Heart right ventricle (tissue), 16 donors: ENCODE measurements at regions of chr5 and their contacts with region 1.

Region 1: GRCh38 chr5:139335811-139336210 is 5.8 kb upstream of the PAIP2 start:
- DNase-seq: no peak
- ATAC-seq: peak in 2 of 8 donors; percentile 14 to 24
- H3K4me3 ChIP-seq: no peak overlapping the region
- H3K27ac ChIP-seq: no peak overlapping the region
- H3K4me1 ChIP-seq: peaks cover 0 to 6% (median 2%) of the 10 kb centered on the region in 9 donors
- H3K27me3 ChIP-seq: no peaks in the 10 kb centered on the region
- CTCF ChIP-seq: no peak

Region 2: DNA sequence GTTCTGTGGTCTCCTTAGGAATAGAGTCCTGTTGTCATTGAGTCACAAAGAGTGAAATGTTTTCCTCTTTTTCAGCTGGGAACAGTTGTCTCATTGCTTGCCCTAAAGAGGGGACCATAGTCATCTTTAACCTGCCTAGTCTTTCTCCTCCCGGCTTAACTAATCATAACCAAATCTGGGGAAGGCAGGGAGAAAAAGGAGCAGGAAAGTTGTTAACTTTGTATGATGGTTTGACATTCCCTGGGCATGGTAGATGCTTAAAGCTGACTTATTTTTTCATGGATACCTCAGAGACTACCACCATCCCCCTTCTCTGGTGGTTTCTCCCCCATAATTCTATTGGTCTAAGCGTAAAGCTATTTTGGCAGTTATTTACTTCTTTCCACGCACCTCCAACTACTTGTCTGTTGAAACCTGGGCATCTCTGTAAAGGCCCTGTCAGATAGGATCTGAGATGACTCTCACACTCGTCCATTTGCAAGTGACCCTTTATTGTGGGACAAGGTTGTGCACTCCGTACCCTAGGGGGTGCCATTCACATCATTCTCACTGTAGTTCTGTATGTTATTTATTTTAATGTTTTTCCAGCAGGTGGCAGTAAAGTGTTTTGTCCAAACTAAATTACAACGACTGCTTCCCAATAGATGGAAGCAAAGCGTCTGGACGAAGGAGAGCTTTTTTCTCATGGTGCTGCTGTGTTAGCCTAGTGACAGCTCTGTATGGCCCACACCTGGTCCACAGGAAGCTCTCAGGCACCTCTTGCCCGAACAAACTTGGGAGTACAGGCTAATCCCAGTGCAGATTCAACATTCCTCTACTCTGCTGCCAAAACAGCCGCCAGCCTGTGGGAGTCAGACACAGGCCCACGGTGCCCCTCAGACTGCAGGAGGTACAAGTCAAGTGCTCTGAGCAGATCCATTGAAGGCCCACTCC is 1299.9 kb before region 1 on chr5:
- intact Hi-C with region 1: no loop called
- DNase-seq: peak in 1 of 2 donors; percentile 74
- ATAC-seq: peak; percentile 8 to 66 (median 55)
- H3K4me3 ChIP-seq: no peak overlapping the region
- H3K27ac ChIP-seq: peak overlapping the region in 6 of 10 donors; percentile 9 to 51 (median 36)
- H3K4me1 ChIP-seq: peaks cover 0 to 41% (median 25%) of the 10 kb centered on the region in 9 donors
- H3K27me3 ChIP-seq: no peaks in the 10 kb centered on the region
- CTCF ChIP-seq: peak; percentile 54 to 94 (median 82)

Region 3: GRCh38 chr5:138568061-138568824 is 767.6 kb before region 1 on chr5:
- intact Hi-C with region 1: loop called in 1 of 10 experiments (anchors 10 kb)
- DNase-seq: no peak
- ATAC-seq: no peak
- H3K4me3 ChIP-seq: no peak overlapping the region
- H3K27ac ChIP-seq: no peak overlapping the region
- H3K4me1 ChIP-seq: peaks cover 0 to 44% (median 16%) of the 10 kb centered on the region in 9 donors
- H3K27me3 ChIP-seq: no peaks in the 10 kb centered on the region
- CTCF ChIP-seq: no peak

Region 4: GRCh38 chr5:138967791-138968448 is 367.9 kb before region 1 on chr5:
- intact Hi-C with region 1: no loop called
- DNase-seq: peak in 1 of 2 donors; percentile 23
- ATAC-seq: peak in 3 of 8 donors; percentile 30 to 38 (median 32)
- H3K4me3 ChIP-seq: no peak overlapping the region
- H3K27ac ChIP-seq: peak overlapping the region in 2 of 10 donors; percentile 63 to 76
- H3K4me1 ChIP-seq: peaks cover 10 to 71% (median 33%) of the 10 kb centered on the region in 9 donors
- H3K27me3 ChIP-seq: no peaks in the 10 kb centered on the region
- CTCF ChIP-seq: no peak

Region 5: GRCh38 chr5:139193928-139194327 is 141.9 kb before region 1 on chr5:
- intact Hi-C with region 1: no loop called
- DNase-seq: no peak
- ATAC-seq: no peak
- H3K4me3 ChIP-seq: no peak overlapping the region
- H3K27ac ChIP-seq: no peak overlapping the region
- H3K4me1 ChIP-seq: peaks cover 0 to 40% (median 8%) of the 10 kb centered on the region in 9 donors
- H3K27me3 ChIP-seq: no peaks in the 10 kb centered on the region
- CTCF ChIP-seq: peak in 1 of 9 donors; percentile 31